ENCODE measurements at regions of chr14 and their contacts with region 1.

Region 1: DNA sequence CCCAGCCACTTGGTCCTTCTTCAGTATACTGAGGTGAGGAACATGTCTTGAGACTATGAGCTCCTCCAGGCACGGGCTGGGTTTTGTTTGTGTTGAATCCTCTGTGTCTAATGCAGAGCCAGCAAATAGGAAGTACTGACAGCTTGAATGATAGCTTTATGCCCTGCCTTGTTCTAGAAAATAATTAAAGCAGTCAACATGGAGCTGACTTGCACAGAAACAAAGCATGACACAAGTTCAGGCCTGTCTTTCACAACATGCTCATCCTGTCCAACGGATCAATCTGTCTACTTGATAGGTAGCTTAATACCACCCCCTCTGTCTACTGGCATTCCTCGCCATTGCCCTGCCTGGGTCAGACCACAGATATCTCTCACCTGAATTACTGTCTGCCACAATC is 140.9 kb downstream of the ESRRB start:
- DNase-seq: no peak
- ATAC-seq: no peak

Region 2: GRCh38 chr14:76346391-76347160 is 170.3 kb before region 1 on chr14:
- intact Hi-C with region 1: no loop called
- DNase-seq: no peak
- ATAC-seq: no peak

Region 3: GRCh38 chr14:76375947-76376404 is 140.9 kb before region 1 on chr14 and contains the start of gene ESRRB:
- intact Hi-C with region 1: loop called (anchors 5 kb)
- DNase-seq: no peak
- ATAC-seq: no peak
- total RNA-seq, gene ESRRB: 0.18 TPM

Region 4: GRCh38 chr14:77000340-77001270 is 483.7 kb after region 1 on chr14:
- intact Hi-C with region 1: no loop called
- DNase-seq: no peak
- ATAC-seq: peak; percentile 89

Region 5: GRCh38 chr14:78259831-78260230 is 1742.9 kb after region 1 on chr14:
- intact Hi-C with region 1: no loop called
- DNase-seq: no peak
- ATAC-seq: no peak

Measured in sciatic nerve (tissue), 2 donors.